HAP-1 (cell line): ENCODE measurements at regions of chr6 and their contacts with region 1.

Region 1: DNA sequence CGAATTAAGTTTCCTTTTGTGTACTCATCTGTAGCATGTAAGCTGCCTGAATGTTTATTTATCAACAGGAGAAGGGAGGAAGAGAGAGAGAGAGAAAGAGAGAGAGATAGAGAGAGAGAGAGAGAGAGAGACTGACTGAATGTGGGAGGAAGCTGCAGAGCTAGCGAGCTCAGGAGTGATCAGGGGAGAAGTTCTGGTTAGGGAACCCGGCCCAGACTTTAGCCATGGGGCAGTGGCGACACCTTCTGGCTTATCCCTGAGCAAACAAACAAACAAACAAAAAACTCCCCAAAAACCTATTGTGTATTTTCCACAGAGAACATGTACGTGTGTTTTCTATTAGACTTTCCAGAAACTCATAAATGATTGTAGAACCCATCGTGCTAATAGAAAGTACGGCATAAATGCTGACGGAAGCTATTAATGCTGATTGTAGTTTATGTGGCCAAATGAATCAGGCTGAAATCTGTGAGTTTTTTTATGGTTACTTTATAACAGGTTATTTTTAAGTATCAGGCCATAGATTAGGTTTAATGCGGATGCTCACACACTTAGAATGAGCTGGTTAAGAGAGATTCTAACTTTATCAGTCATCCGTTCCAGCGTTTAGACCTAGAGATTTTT is 92.8 kb downstream of the CLIC5 start:
- DNase-seq: peak in 1 of 2 experiments; percentile 60
- H3K4me3 ChIP-seq: no peak overlapping the region
- H3K4me1 ChIP-seq: peaks cover 14% of the 10 kb centered on the region
- H3K27me3 ChIP-seq: 0 out of 2 replicates have a peak, but pooled peaks cover 12% of the 10 kb centered on the region

Region 2: DNA sequence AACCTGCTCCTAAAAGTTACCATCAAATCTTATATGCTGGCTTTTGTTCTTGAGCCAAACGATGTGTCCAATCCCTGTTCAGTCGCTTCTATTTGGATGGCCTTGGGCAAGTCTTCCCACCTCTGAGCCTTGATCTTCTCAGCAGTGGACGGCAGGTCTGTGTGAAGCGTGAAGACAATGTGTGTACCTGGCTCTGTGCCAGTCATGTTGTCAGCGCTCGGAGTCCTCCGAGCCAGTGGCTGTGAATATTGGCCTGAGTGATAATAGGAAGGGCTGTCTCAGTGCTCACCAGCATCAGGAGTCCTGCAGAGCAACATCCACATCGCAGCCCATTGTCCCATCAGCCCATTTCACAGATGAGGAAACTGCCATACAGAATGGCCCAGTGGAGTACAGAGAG is 1316.3 kb before region 1 on chr6:
- in situ Hi-C with region 1: loop called (anchors 25 kb)
- DNase-seq: no peak
- H3K4me3 ChIP-seq: no peak overlapping the region
- H3K4me1 ChIP-seq: peaks cover 6% of the 10 kb centered on the region; the same call in 1 of the 2 replicates
- H3K27me3 ChIP-seq: peaks cover 10% of the 10 kb centered on the region